ENCODE measurements at regions of chr16 and their contacts with region 1.

Region 1: GRCh38 chr16:66728117-66728787 is 23.2 kb downstream of the DYNC1LI2 start:
- DNase-seq: peak in 2 of 5 donors; percentile 40
- H3K4me3 ChIP-seq: no peak overlapping the region
- H3K4me3 Mint-ChIP-seq: no peak overlapping the region
- H3K27ac ChIP-seq: no peak overlapping the region
- H3K27ac Mint-ChIP-seq: peak overlapping the region in 5 of 8 donors; percentile 8 to 89 (median 70)
- H3K4me1 ChIP-seq: no peaks in the 10 kb centered on the region
- H3K4me1 Mint-ChIP-seq: peaks cover 6% of the 10 kb centered on the region in 3 donors
- H3K27me3 ChIP-seq: no peaks in the 10 kb centered on the region
- H3K27me3 Mint-ChIP-seq: no peaks in the 10 kb centered on the region

Region 2: DNA sequence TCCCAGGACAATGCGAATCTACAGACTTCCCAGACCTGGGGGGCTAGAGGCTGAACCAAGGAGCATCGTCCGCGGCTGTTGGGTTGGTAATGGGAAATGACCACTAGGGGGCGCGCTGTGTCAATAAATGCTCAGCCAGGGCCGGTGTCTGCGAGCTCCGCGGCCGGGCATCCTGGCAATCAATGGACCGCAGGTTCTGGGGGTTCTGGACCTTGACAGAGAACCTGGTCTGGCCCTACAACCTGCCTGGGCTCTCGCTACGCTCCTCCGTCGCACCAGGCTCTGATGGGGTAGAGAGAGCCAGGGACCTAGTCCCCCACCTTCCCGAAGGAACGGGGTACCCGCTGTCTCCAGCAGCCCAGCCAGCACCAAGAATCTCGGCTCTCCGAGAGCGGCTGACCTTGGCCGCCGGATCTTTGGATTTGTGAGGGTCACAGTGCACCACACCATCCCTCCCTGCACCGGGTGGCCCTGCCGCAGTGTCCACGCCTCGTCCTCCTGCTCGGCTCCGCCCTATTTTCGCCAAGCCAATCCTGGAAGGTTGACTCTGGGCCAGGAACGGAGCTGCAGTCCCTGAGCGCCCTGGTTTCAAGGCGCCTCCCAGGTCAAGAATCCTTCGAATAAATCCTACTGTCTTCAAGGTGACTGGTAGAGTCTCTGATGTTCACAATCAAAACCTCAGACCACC is 321.6 kb before region 1 on chr16:
- CTCF ChIA-PET with region 1: interaction called, 12 read pairs
- POLR2A ChIA-PET with region 1: no interaction called
- DNase-seq: peak; percentile 74 to 89 (median 82)
- H3K4me3 ChIP-seq: peak overlapping the region; percentile 75
- H3K4me3 Mint-ChIP-seq: peak overlapping the region; percentile 81 to 93 (median 85)
- H3K27ac ChIP-seq: no peak overlapping the region
- H3K27ac Mint-ChIP-seq: peak overlapping the region in 4 of 8 donors; percentile 29 to 76 (median 64)
- H3K4me1 ChIP-seq: peaks cover 21% of the 10 kb centered on the region
- H3K4me1 Mint-ChIP-seq: peaks cover 25 to 29% (median 28%) of the 10 kb centered on the region in 3 donors
- H3K27me3 ChIP-seq: no peaks in the 10 kb centered on the region
- H3K27me3 Mint-ChIP-seq: peaks cover 0 to 12% of the 10 kb centered on the region in 2 donors

Region 3: GRCh38 chr16:66705790-66706505 is 22.3 kb before region 1 on chr16:
- CTCF ChIA-PET with region 1: no interaction called
- POLR2A ChIA-PET with region 1: no interaction called
- DNase-seq: no peak
- H3K4me3 ChIP-seq: no peak overlapping the region
- H3K4me3 Mint-ChIP-seq: no peak overlapping the region
- H3K27ac ChIP-seq: no peak overlapping the region
- H3K27ac Mint-ChIP-seq: no peak overlapping the region
- H3K4me1 ChIP-seq: no peaks in the 10 kb centered on the region
- H3K4me1 Mint-ChIP-seq: peaks cover 0 to under 1% (median 0%) of the 10 kb centered on the region in 3 donors
- H3K27me3 ChIP-seq: no peaks in the 10 kb centered on the region
- H3K27me3 Mint-ChIP-seq: peaks cover 12 to 14% of the 10 kb centered on the region in 2 donors

Region 4: GRCh38 chr16:66740010-66740409 is 11.8 kb after region 1 on chr16:
- CTCF ChIA-PET with region 1: interaction called, 16 read pairs
- POLR2A ChIA-PET with region 1: no interaction called
- DNase-seq: peak in 3 of 5 donors; percentile 8 to 19 (median 10)
- H3K4me3 ChIP-seq: no peak overlapping the region
- H3K4me3 Mint-ChIP-seq: no peak overlapping the region
- H3K27ac ChIP-seq: no peak overlapping the region
- H3K27ac Mint-ChIP-seq: peak overlapping the region in 5 of 8 donors; percentile 6 to 50 (median 43)
- H3K4me1 ChIP-seq: peaks cover 4% of the 10 kb centered on the region
- H3K4me1 Mint-ChIP-seq: peaks cover 13 to 33% (median 30%) of the 10 kb centered on the region in 3 donors
- H3K27me3 ChIP-seq: no peaks in the 10 kb centered on the region
- H3K27me3 Mint-ChIP-seq: no peaks in the 10 kb centered on the region

Region 5: GRCh38 chr16:66751303-66751991 is 23.2 kb after region 1 on chr16 and contains the start of gene DYNC1LI2:
- CTCF ChIA-PET with region 1: interaction called, 26 read pairs
- POLR2A ChIA-PET with region 1: no interaction called
- DNase-seq: peak; percentile 68 to 87 (median 83)
- H3K4me3 ChIP-seq: peak within 1 kb of the TSS; percentile 83
- H3K4me3 Mint-ChIP-seq: peak within 1 kb of the TSS; percentile 85 to 96 (median 92)
- H3K27ac ChIP-seq: peak within 1 kb of the TSS; percentile 80
- H3K27ac Mint-ChIP-seq: peak within 1 kb of the TSS; percentile 81 to 98 (median 90)
- H3K4me1 ChIP-seq: peaks cover 31% of the 10 kb centered on the region
- H3K4me1 Mint-ChIP-seq: peaks cover 38 to 49% (median 44%) of the 10 kb centered on the region in 3 donors
- H3K27me3 ChIP-seq: no peaks in the 10 kb centered on the region
- H3K27me3 Mint-ChIP-seq: peaks cover 8 to 14% of the 10 kb centered on the region in 2 donors
- total RNA-seq, gene DYNC1LI2: 50.5 to 53.8 TPM

Region 6: GRCh38 chr16:66872943-66873684 is 144.9 kb after region 1 on chr16:
- CTCF ChIA-PET with region 1: interaction called, 12 read pairs
- POLR2A ChIA-PET with region 1: no interaction called
- DNase-seq: peak; percentile 76 to 91 (median 84)
- H3K4me3 ChIP-seq: peak overlapping the region; percentile 69
- H3K4me3 Mint-ChIP-seq: peak overlapping the region; percentile 73 to 93 (median 83)
- H3K27ac ChIP-seq: peak overlapping the region; percentile 35
- H3K27ac Mint-ChIP-seq: peak overlapping the region; percentile 30 to 99 (median 86)
- H3K4me1 ChIP-seq: peaks cover 17% of the 10 kb centered on the region
- H3K4me1 Mint-ChIP-seq: peaks cover 26 to 27% (median 26%) of the 10 kb centered on the region in 3 donors
- H3K27me3 ChIP-seq: no peaks in the 10 kb centered on the region
- H3K27me3 Mint-ChIP-seq: peaks cover 0 to 2% of the 10 kb centered on the region in 2 donors